AG04450 (cell line): ENCODE measurements at regions of chr5 and their contacts with region 1.

Region 1: GRCh38 chr5:73448463-73449136 is at the start of gene FOXD1:
- DNase-seq: peak; percentile 93
- H3K4me3 ChIP-seq: peak within 1 kb of the TSS; percentile 85
- H3K27ac ChIP-seq: peak within 1 kb of the TSS; percentile 90
- H3K27me3 ChIP-seq: no peaks in the 10 kb centered on the region
- CTCF ChIP-seq: peak; percentile 8; the same call in 1 of the 2 replicates
- polyA plus RNA-seq, gene FOXD1: 7.5 and 8.4 TPM in 2 replicates

Region 2: GRCh38 chr5:73232266-73233017 is 216.2 kb before region 1 on chr5:
- CTCF ChIA-PET with region 1: interaction called, 10 read pairs
- POLR2A ChIA-PET with region 1: no interaction called
- DNase-seq: no peak
- H3K4me3 ChIP-seq: no peak overlapping the region
- H3K27ac ChIP-seq: peak overlapping the region; percentile 39
- H3K27me3 ChIP-seq: no peaks in the 10 kb centered on the region
- CTCF ChIP-seq: no peak

Region 3: DNA sequence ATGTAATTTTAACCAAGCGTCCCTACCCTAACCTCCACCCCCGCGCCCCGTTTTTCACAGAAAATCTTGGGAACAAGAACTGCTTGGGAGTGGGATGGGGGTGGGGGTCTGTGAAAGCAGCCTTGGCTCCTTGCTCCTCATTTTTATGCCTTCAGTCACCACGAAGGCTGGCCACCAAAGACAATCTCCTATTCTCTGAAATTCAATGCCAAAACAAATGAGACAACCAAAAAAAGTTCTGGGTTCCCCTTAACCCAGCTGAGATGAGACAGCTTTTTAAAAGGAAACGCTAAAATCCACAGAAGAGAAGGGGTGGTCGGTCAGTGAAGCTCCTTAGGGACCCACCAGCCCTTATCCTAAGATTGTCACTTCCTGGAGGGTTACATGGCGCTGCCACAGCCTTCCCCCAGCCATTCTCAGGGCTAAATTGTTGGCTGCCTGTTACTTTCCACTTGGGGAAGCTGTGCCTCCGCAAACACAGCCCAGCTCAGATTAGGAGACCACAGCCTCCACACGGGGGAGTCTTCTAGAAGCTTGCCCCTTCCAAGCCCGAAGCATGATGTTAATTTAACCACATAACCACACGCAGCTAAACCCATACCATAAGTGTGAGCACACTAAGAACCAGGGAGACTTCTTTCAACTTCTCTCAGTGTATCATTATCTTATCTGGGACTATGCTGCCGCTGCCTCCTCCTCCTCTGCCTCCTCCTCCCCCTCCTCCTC is 136.3 kb before region 1 on chr5:
- CTCF ChIA-PET with region 1: interaction called, 9 read pairs
- POLR2A ChIA-PET with region 1: interaction called, 13 read pairs
- DNase-seq: peak; percentile 89
- H3K4me3 ChIP-seq: no peak overlapping the region
- H3K27ac ChIP-seq: peak overlapping the region; percentile 81
- H3K27me3 ChIP-seq: no peaks in the 10 kb centered on the region
- CTCF ChIP-seq: peak; percentile 71

Region 4: GRCh38 chr5:73370640-73371583 is 77.7 kb before region 1 on chr5:
- CTCF ChIA-PET with region 1: no interaction called
- POLR2A ChIA-PET with region 1: interaction called, 17 read pairs
- DNase-seq: peak; percentile 69
- H3K4me3 ChIP-seq: no peak overlapping the region; the same call in 1 of the 2 replicates
- H3K27ac ChIP-seq: peak overlapping the region; percentile 72
- H3K27me3 ChIP-seq: no peaks in the 10 kb centered on the region
- CTCF ChIP-seq: no peak

Region 5: GRCh38 chr5:73482383-73483136 is 34.0 kb after region 1 on chr5:
- CTCF ChIA-PET with region 1: no interaction called
- POLR2A ChIA-PET with region 1: no interaction called
- DNase-seq: peak; percentile 47
- H3K4me3 ChIP-seq: no peak overlapping the region
- H3K27ac ChIP-seq: no peak overlapping the region
- H3K27me3 ChIP-seq: peaks cover 5% of the 10 kb centered on the region
- CTCF ChIP-seq: no peak